IMR-90 (cell line): ENCODE measurements at regions of chr14 and their contacts with region 1.

Region 1: DNA sequence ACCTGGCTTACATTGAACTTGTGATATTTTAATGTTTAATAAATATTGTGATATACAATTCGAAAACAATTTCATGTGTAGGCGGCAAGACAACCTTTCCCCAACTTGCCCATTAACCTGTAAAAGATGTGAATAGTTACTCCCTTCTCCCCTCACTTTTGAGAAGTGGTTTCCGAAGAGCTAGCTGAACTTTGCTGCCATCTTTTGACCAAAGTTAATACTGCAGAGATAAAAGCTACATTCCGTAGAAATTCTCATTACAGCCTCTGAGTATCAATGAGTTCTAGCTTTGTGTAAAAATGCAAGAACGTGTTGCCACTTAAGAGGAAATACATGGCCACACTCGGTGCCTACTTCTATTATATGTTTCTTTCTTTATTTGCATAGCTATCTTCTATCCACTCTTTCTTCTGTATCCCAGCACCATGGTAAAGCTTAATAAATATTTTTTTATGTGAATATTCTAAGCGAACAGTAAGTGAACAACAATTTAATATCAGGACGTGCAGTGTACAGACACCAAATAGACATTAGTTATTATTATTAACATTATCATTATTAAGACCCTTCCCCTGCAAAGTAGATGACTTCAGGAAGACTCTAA is 105.1 kb upstream of the TMEM260 start:
- DNase-seq: peak; percentile 41
- ATAC-seq: peak; percentile 81
- H3K4me3 ChIP-seq: no peak overlapping the region
- H3K27ac ChIP-seq: no peak overlapping the region
- H3K4me1 ChIP-seq: no peaks in the 10 kb centered on the region
- H3K27me3 ChIP-seq: peaks cover 24% of the 10 kb centered on the region
- CTCF ChIP-seq: peak; percentile 87
- POLR2A ChIP-seq: no peak
- RAD21 ChIP-seq: peak; percentile 97

Region 2: DNA sequence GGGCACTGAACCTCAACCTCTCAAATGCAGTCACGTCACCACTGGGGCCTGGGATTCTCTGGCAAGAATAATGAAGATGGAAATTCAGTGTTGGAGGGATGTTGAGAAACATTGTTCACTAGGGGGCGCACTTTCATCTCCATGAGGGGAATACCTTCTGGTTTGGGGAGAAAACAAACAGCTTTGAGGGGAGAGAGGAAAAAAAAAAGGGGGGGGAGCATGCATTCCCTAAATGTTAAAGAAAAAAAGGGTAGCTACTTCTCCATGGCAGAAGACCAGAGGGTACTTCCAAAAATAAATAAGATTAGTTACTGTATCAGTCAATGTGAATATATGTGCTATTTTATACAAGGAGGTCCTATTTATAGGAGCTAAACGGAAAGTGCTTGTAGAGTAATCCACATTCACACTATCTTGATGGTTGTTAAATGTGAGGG is 1028.3 kb before region 1 on chr14:
- CTCF ChIA-PET with region 1: interaction called, 8 read pairs
- POLR2A ChIA-PET with region 1: no interaction called
- dilution Hi-C with region 1: no loop called
- in situ Hi-C with region 1: no loop called
- intact Hi-C with region 1: loop called (anchors 1 kb)
- DNase-seq: peak; percentile 86
- ATAC-seq: peak; percentile 38
- H3K4me3 ChIP-seq: no peak overlapping the region
- H3K27ac ChIP-seq: no peak overlapping the region
- H3K4me1 ChIP-seq: peaks cover 8% of the 10 kb centered on the region
- H3K27me3 ChIP-seq: no peaks in the 10 kb centered on the region
- CTCF ChIP-seq: peak; percentile 72
- POLR2A ChIP-seq: no peak; the same call in 1 of the 2 replicates
- RAD21 ChIP-seq: peak; percentile 75

Region 3: DNA sequence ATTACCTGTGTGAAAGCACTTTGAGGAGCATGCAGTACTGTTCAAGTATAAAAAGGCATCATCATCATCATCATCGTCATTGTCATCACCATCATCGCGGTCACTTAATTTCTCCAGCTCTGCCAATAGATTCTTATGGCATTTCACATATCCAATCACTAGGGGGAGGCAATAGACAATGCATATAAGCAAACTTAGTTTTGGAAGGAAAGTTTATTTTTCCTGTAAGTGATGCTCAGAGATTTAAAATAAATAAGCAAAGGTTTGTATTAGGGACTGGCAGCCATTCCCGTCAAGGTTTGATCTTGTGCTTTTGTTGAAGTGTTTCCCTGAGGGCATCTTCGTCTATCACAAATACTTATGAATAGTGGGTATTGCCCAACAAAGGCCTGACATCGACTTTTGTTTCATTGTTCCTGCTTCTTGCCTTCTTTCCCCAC is 767.1 kb before region 1 on chr14:
- CTCF ChIA-PET with region 1: interaction called, 4 read pairs
- POLR2A ChIA-PET with region 1: interaction called, 3 read pairs
- dilution Hi-C with region 1: no loop called
- in situ Hi-C with region 1: loop called (anchors 5 kb)
- intact Hi-C with region 1: loop called (anchors 1 kb)
- DNase-seq: peak; percentile 76
- ATAC-seq: peak; percentile 81
- H3K4me3 ChIP-seq: no peak overlapping the region
- H3K27ac ChIP-seq: no peak overlapping the region
- H3K4me1 ChIP-seq: peaks cover 4% of the 10 kb centered on the region
- H3K27me3 ChIP-seq: no peaks in the 10 kb centered on the region
- CTCF ChIP-seq: peak; percentile 82
- POLR2A ChIP-seq: no peak
- RAD21 ChIP-seq: peak; percentile 91

Region 4: GRCh38 chr14:55731881-55732498 is 742.5 kb before region 1 on chr14:
- CTCF ChIA-PET with region 1: interaction called, 8 read pairs
- POLR2A ChIA-PET with region 1: no interaction called
- dilution Hi-C with region 1: no loop called
- in situ Hi-C with region 1: no loop called
- intact Hi-C with region 1: loop called (anchors 5 kb)
- DNase-seq: peak; percentile 24
- ATAC-seq: peak; percentile 66
- H3K4me3 ChIP-seq: no peak overlapping the region
- H3K27ac ChIP-seq: no peak overlapping the region
- H3K4me1 ChIP-seq: no peaks in the 10 kb centered on the region
- H3K27me3 ChIP-seq: no peaks in the 10 kb centered on the region
- CTCF ChIP-seq: peak; percentile 64
- POLR2A ChIP-seq: no peak
- RAD21 ChIP-seq: peak; percentile 72

Region 5: DNA sequence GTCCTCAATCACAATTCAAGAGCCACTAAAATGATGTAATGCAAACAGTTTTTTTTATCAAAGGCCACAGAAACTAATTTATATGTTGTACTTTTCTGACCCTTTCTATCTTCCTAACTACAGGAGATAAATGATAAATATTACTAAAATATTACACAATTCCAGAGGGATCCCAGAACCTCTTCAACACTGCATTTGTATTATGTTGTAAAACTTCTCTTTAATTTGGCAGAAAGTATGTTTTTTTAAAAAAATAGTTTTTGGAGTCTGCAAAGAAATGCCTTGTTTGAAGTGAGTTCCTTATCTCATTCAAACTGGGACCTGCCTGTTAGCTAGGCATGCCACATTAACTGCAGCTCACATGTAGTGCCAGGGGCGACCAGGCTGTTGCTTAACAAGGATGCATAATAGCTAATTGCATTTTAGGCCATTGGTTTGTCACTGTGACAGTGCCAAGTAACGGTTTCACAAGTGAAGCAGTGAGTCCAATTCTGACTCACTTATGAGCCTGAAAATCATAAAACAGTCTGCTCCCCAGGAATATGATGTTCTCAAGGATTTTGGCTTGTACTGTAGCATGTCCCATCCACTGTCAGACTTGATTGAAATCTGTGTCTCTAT is 627.6 kb before region 1 on chr14:
- CTCF ChIA-PET with region 1: interaction called, 5 read pairs
- POLR2A ChIA-PET with region 1: no interaction called
- dilution Hi-C with region 1: no loop called
- in situ Hi-C with region 1: no loop called
- intact Hi-C with region 1: loop called (anchors 10 kb)
- DNase-seq: peak; percentile 50
- ATAC-seq: no peak
- H3K4me3 ChIP-seq: no peak overlapping the region
- H3K27ac ChIP-seq: no peak overlapping the region
- H3K4me1 ChIP-seq: peaks cover 18% of the 10 kb centered on the region
- H3K27me3 ChIP-seq: no peaks in the 10 kb centered on the region
- CTCF ChIP-seq: no peak
- POLR2A ChIP-seq: no peak
- RAD21 ChIP-seq: no peak

Region 6: DNA sequence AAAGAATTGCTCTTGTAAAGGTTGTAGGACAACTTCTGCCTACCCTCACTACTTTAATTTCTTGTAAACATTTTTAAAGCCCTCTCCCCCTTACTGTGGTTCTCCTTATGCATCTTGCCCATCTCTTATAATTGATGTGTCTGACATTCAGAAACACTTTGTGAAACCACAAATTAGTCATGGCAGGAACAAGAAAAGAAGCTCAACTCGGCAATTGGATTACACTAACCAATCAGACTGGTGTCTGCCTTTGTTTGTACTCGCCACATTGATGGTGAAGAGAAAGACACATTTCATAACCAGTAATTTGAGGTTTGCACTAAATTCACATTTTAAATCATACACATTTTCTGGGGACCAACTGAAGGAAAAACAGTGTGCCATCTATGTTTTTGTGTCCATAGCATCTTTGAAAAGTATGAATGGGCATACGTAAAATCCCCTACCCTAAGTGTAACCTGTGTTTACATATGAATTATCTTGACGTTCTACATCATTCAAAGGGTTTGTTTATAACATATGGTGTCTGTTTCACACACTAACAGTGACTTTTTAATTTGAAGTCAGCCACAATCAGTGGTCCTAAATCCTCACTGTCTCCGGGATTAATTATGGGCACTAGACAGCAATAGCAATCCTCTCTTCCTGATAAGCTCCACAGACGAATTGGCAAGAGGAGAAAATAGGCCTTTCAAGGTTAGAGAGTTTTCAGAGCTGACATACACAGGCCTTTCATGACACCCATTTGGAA is 285.8 kb after region 1 on chr14:
- CTCF ChIA-PET with region 1: no interaction called
- POLR2A ChIA-PET with region 1: no interaction called
- dilution Hi-C with region 1: no loop called
- in situ Hi-C with region 1: no loop called
- intact Hi-C with region 1: no loop called
- DNase-seq: no peak
- ATAC-seq: no peak
- H3K4me3 ChIP-seq: no peak overlapping the region
- H3K27ac ChIP-seq: no peak overlapping the region
- H3K4me1 ChIP-seq: no peaks in the 10 kb centered on the region
- H3K27me3 ChIP-seq: no peaks in the 10 kb centered on the region
- CTCF ChIP-seq: no peak
- POLR2A ChIP-seq: no peak
- RAD21 ChIP-seq: no peak